ENCODE measurements at regions of chr15 and their contacts with region 1.

Region 1: GRCh38 chr15:70376929-70377691 is 279.4 kb upstream of the TLE3 start:
- DNase-seq: no peak
- ATAC-seq: no peak
- H3K4me3 ChIP-seq: peak overlapping the region in 1 of 2 experiments; percentile 17; a peak in 1 of 4 replicates
- H3K27ac ChIP-seq: peak overlapping the region; percentile 57
- H3K4me1 ChIP-seq: peaks cover 44% of the 10 kb centered on the region
- H3K27me3 ChIP-seq: no peaks in the 10 kb centered on the region
- CTCF ChIP-seq: no peak

Region 2: DNA sequence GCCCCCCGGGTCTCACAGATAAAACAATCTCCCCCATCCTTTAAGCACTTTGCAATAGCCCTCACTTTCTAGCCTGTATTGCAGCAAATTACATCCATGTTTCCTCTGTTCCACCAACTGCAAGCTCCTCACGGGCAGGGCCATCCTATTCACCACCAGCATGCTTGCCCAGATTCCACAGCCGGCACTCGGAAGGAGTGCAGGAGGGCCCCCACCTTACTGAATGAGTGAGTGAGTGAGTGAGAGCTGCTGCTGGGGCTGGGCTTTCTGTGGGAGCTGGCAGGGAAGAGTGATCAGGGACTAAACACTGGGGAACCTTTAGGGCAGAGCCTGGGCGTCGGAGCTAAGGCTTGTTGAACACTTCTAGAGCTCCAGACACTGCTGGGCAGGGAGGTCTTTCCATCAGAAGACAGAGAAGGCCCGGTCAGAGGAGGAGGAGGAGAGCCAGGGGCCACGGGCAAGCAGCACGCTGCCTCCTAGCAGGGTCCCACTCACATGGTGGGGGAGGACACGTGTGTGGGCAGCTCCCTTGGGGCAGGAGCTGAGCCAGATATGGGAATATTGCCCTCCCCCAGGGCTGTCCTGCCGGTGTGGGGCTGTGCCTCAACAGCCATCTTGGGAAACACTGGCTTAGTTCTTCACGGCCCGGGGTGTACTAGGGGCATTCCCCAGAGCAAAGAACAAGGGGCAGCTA is 189.9 kb before region 1 on chr15:
- CTCF ChIA-PET with region 1: interaction called, 10 read pairs
- POLR2A ChIA-PET with region 1: no interaction called
- in situ Hi-C with region 1: no loop called
- intact Hi-C with region 1: no loop called
- DNase-seq: no peak
- ATAC-seq: no peak
- H3K4me3 ChIP-seq: no peak overlapping the region
- H3K27ac ChIP-seq: no peak overlapping the region
- H3K4me1 ChIP-seq: no peaks in the 10 kb centered on the region
- H3K27me3 ChIP-seq: no peaks in the 10 kb centered on the region
- CTCF ChIP-seq: no peak

Region 3: DNA sequence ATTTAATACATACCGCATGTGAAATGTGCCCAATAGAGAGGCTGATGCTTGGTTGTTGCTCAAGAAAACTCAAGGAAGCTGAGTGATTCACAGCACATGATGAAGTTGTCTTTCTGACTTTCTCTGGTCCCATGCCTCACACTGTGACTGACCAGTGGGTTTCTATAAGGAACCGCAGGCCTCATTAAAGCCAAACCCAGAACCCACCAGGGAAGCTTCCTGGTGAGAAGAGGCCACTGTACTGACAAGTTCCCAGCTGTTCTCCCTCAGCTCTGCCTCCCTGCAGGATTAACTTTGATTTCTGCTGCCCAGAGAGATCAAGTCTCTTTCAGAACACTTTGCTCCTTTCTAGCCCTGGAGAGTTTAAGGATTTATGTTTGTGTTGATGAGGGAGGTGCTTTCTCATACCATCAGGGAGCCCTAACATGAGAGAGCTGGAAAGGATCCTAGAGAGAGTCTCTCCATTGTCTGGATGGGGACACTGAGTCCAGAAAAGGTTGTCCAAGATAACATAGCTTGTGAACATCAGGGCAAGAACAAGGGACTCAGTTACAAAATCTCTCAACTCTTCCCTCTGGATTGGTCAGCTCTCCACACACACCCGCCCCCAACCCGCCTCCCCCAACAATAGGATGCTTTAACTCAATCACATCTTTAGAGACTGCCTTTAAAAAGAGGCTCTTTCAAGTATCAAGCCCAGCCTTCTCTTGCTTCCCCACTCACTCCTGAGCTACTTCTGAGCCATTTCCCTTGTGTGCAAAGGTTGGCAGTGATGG is 23.8 kb after region 1 on chr15:
- CTCF ChIA-PET with region 1: no interaction called
- POLR2A ChIA-PET with region 1: no interaction called
- in situ Hi-C with region 1: no loop called
- intact Hi-C with region 1: no loop called
- DNase-seq: no peak
- ATAC-seq: no peak
- H3K4me3 ChIP-seq: no peak overlapping the region
- H3K27ac ChIP-seq: no peak overlapping the region
- H3K4me1 ChIP-seq: no peaks in the 10 kb centered on the region
- H3K27me3 ChIP-seq: no peaks in the 10 kb centered on the region
- CTCF ChIP-seq: no peak

Region 4: DNA sequence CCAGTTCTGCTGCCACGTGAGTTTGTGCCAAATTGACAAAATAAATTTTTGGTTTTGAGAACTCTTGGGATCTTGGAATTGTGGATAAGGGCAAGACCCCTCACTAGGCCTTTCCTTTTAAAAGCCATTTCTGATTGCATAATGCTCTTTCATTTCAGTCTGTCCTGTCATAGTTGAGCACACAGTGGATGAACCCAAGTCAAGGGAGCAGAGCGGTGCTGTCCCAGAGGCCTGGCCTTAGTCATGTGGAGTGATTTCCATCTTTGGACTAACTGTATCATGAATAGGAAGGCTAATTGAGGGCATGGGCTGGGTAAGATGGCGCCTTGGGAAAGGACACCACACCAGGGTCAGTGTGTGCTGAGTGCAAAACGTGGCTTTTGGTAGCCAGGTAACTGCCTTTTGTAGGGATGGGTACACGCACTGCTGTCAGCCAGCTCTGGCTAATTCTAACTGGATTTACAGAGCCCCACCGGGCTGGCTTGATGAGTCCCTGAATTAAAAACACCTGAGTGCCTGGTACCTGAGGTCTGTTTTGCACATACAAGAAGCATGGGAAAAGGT is 82.3 kb after region 1 on chr15:
- CTCF ChIA-PET with region 1: no interaction called
- POLR2A ChIA-PET with region 1: no interaction called
- in situ Hi-C with region 1: no loop called
- intact Hi-C with region 1: no loop called
- DNase-seq: no peak
- ATAC-seq: no peak
- H3K4me3 ChIP-seq: no peak overlapping the region
- H3K27ac ChIP-seq: peak overlapping the region; percentile 57; the same call in 1 of the 2 replicates
- H3K4me1 ChIP-seq: peaks cover 14% of the 10 kb centered on the region; the same call in 1 of the 2 replicates
- H3K27me3 ChIP-seq: no peaks in the 10 kb centered on the region
- CTCF ChIP-seq: no peak

Region 5: DNA sequence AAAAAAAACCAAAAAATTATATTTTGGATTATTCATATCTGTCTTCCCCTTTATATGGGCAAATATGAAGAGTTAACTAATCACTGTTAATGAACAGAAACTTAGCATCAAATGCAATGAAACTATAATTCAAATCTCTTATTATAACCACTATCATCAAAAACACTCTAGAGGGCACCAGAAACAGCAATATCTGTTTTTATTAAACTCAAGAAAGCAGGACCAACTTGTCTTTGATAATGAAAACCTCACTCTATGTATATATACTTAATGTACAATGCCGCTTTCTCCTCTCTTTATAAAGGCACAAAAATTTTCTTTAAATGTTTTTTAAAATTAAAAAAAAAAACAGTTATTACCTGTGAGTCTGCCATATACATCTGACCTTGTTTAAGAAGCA is 293.6 kb after region 1 on chr15:
- CTCF ChIA-PET with region 1: no interaction called
- POLR2A ChIA-PET with region 1: no interaction called
- in situ Hi-C with region 1: no loop called
- intact Hi-C with region 1: no loop called
- DNase-seq: no peak
- ATAC-seq: no peak
- H3K4me3 ChIP-seq: no peak overlapping the region
- H3K27ac ChIP-seq: no peak overlapping the region
- H3K4me1 ChIP-seq: no peaks in the 10 kb centered on the region; the same call in 1 of the 2 replicates
- H3K27me3 ChIP-seq: no peaks in the 10 kb centered on the region
- CTCF ChIP-seq: peak; percentile 12; the same call in 1 of the 2 replicates